Dorsolateral prefrontal cortex (tissue), 120 donors: ENCODE measurements at regions of chr1 and their contacts with region 1.

Region 1: DNA sequence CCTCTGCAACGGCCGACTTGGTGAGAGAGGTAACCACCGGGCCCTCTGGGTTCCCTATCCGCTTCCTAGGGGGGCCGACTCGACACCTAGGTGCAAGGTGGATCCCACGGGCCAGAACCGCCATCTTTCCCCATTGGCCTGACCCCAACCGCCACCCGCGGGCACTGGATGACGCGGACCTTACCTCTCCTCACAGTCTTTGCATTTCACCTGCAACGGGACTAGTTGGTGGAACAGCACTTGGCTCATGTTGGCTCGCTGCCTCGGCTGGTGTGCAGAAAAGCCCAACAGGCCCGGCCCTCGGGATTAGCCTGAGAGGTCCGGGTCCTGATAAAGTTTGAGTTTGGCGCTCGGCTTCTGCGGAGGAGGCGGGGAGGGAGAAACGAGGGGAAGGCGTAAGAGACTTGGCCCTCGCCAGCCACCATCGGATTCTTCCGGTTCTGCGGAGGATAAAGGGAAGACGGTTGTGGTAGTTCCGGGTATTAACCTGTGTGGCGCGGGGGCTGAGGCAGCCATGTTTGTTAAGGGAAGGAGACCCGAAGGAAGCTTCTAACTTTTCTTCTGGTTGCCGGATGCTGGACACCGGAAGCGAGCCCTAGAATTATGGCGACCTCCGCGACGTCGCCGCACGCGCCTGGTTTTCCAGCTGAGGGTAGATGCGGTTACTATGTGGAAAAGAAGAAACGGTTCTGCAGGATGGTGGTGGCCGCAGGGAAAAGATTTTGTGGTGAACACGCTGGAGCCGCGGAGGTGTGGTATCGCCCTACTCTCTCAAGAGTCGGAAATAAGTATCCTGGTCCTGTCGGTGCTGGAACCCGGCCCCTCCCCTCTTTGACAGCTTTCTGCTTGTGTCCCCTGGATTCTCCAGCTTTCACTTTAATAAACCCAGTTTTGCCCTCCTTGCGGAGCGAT is at the starts of genes SASS6 and TRMT13:
- DNase-seq: peak; percentile 96 to 98 (median 97)
- H3K4me3 ChIP-seq: peak within 1 kb of the TSS; percentile 65 to 97 (median 88)
- H3K27ac ChIP-seq: peak within 1 kb of the TSS in 56 of 59 donors; percentile 1 to 90 (median 82)
- H3K27me3 ChIP-seq: no peaks in the 10 kb centered on the region
- CTCF ChIP-seq: peak in 34 of 56 donors; percentile 2 to 54 (median 35)
- total RNA-seq, gene SASS6: 1.5 to 4.7 (median 3.1) TPM
- total RNA-seq, gene TRMT13: 7.5 to 30.3 (median 15.5) TPM

Region 2: GRCh38 chr1:99818063-99818699 is 314.6 kb before region 1 on chr1:
- intact Hi-C with region 1: loop called in 1 of 2 experiments (anchors 10 kb)
- DNase-seq: no peak
- H3K4me3 ChIP-seq: no peak overlapping the region
- H3K27ac ChIP-seq: no peak overlapping the region
- H3K27me3 ChIP-seq: peaks cover 0 to 3% (median 0%) of the 10 kb centered on the region in 45 donors
- CTCF ChIP-seq: no peak

Region 3: DNA sequence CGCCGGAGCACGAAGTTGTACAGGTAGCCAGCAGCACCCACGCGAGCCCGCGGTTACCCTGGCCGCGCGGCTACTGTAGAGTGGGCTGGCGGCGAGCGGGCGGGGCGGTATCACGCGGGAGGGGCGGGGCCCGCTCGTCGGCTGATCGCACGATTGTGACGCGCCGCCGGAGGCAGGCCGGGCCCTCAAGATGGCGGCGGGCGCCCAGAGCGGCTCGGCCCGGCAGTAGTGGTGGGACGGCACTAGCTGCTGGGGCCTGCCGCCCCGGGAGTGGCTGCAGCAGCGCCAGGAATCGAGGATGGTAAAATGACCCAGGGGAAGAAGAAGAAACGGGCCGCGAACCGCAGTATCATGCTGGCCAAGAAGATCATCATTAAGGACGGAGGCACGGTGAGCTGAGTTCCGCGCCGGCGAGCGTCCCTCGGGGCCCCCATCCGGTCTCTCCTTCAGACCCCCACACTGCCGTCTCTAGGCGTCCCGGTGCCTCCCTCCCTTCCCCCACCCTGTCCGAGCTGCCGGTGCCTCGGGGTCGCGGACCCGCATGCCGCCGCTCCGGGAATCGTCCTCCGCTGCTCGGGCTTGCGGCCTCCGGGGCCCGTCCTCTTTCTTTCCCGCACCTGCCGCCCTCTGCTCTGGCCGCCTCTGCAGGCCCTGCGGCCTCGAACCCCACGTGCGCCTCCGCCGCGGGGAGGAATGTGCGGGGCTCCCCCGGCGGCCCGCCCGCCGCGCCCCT is 94.7 kb before region 1 on chr1:
- intact Hi-C with region 1: loop called (anchors 2 kb)
- DNase-seq: peak; percentile 81 to 94 (median 90)
- H3K4me3 ChIP-seq: peak overlapping the region; percentile 64 to 98 (median 89)
- H3K27ac ChIP-seq: peak overlapping the region; percentile 82 to 99 (median 97)
- H3K27me3 ChIP-seq: no peaks in the 10 kb centered on the region
- CTCF ChIP-seq: peak in 13 of 56 donors; percentile 3 to 43 (median 14)

Region 4: DNA sequence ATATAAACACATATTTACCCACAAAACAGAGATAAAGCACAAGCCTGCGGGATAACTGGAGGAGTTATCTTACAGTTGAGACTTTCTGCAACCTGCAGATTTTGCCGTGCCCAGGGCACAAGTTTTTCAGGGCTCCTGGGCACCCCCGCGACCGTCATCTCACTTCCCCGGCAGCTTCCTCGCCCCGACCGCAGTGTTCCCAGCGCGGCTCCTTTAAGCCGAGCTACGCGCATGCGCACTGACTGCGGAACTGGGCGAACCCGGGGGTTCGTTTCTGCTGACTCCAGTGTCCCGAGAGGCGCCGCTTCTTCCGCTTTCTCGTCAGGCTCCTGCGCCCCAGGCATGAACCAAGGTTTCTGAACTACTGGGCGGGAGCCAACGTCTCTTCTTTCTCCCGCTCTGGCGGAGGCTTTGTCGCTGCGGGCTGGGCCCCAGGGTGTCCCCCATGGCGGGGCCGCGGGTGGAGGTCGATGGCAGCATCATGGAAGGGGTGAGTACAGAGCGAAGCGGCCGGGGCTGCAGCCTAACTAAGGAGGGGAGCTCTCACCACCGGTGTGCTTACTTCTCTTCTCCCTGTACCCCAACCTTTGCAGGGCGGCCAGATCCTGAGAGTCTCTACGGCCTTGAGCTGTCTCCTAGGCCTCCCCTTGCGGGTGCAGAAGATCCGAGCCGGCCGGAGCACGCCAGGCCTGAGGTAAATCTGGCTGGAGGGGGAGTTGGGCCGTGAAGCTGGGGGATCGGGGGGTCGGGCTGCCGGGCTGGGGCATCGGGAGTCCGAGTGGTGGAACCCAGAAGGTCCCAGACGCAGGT is 133.3 kb after region 1 on chr1 and contains the start of gene RTCA:
- intact Hi-C with region 1: loop called (anchors 1 to 2 kb)
- DNase-seq: peak; percentile 92 to 96 (median 95)
- H3K4me3 ChIP-seq: peak within 1 kb of the TSS; percentile 44 to 100 (median 94)
- H3K27ac ChIP-seq: peak within 1 kb of the TSS in 58 of 59 donors; percentile 6 to 94 (median 80)
- H3K27me3 ChIP-seq: no peaks in the 10 kb centered on the region
- CTCF ChIP-seq: peak in 32 of 56 donors; percentile 8 to 59 (median 34)
- total RNA-seq, gene RTCA: 16.4 to 47.7 (median 35.9) TPM

Region 5: GRCh38 chr1:100895540-100896483 is 763.0 kb after region 1 on chr1 and contains the start of gene SLC30A7:
- intact Hi-C with region 1: loop called in 1 of 2 experiments (anchors 10 kb)
- DNase-seq: peak; percentile 89 to 96 (median 93)
- H3K4me3 ChIP-seq: peak within 1 kb of the TSS; percentile 68 to 98 (median 88)
- H3K27ac ChIP-seq: peak within 1 kb of the TSS; percentile 74 to 97 (median 92)
- H3K27me3 ChIP-seq: no peaks in the 10 kb centered on the region
- CTCF ChIP-seq: peak in 7 of 56 donors; percentile 9 to 37 (median 21)
- total RNA-seq, gene SLC30A7: 14.8 to 30.3 (median 21.4) TPM